ENCODE measurements at regions of chr1 and their contacts with region 1.

Region 1: DNA sequence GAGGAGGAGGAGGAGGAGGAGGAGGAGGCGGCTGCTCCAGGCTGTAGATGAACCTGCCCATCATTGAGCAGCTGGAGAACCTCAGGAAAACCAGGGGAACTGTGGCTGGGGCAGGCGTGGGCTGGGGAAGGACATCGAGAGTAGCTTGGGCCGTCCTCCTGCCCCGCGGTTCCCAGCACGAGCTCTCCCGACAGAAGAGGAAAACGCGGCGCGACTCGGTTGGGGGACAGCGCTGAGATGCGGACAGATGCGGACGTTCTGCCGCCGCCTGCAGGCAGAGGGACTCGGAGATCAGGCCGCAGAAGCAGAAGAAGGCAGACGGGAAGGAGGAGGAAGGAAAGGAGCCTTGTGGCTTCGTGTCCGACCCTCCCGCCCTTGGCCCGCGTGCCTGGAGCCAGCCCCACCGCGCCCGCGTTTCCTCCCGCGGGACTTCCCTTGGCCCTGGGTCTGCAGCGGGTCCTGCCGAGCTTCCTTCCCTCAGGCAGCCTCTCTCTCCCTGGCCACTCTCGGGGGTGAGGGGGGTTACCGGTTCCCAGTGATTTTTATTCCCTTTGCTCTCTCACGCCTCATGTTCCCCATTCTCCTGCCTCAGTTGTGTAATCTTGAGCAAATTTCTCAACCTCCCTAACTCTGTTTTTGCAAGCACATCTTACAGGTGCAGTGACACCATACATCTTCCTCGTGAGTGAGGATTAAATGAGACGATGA is 1.7 kb upstream of the TNFRSF9 start:
- DNase-seq: peak; percentile 49
- ATAC-seq: peak; percentile 64
- H3K4me3 Mint-ChIP-seq: peak overlapping the region; percentile 23
- H3K27ac Mint-ChIP-seq: no peak overlapping the region
- H3K4me1 Mint-ChIP-seq: peaks cover 46% of the 10 kb centered on the region
- H3K27me3 Mint-ChIP-seq: peaks cover 8% of the 10 kb centered on the region

Region 2: GRCh38 chr1:7827126-7827955 is 115.0 kb before region 1 on chr1:
- CTCF ChIA-PET with region 1: no interaction called
- POLR2A ChIA-PET with region 1: no interaction called
- DNase-seq: peak; percentile 22
- ATAC-seq: peak; percentile 67
- H3K4me3 Mint-ChIP-seq: peak overlapping the region; percentile 73
- H3K27ac Mint-ChIP-seq: peak overlapping the region; percentile 84
- H3K4me1 Mint-ChIP-seq: peaks cover 7% of the 10 kb centered on the region
- H3K27me3 Mint-ChIP-seq: no peaks in the 10 kb centered on the region

Region 3: GRCh38 chr1:7930645-7931445 is 11.5 kb before region 1 on chr1:
- CTCF ChIA-PET with region 1: interaction called, 16 read pairs
- POLR2A ChIA-PET with region 1: interaction called, 9 read pairs
- DNase-seq: no peak
- ATAC-seq: peak; percentile 61
- H3K4me3 Mint-ChIP-seq: peak overlapping the region; percentile 63
- H3K27ac Mint-ChIP-seq: peak overlapping the region; percentile 91
- H3K4me1 Mint-ChIP-seq: peaks cover 33% of the 10 kb centered on the region
- H3K27me3 Mint-ChIP-seq: no peaks in the 10 kb centered on the region

Region 4: DNA sequence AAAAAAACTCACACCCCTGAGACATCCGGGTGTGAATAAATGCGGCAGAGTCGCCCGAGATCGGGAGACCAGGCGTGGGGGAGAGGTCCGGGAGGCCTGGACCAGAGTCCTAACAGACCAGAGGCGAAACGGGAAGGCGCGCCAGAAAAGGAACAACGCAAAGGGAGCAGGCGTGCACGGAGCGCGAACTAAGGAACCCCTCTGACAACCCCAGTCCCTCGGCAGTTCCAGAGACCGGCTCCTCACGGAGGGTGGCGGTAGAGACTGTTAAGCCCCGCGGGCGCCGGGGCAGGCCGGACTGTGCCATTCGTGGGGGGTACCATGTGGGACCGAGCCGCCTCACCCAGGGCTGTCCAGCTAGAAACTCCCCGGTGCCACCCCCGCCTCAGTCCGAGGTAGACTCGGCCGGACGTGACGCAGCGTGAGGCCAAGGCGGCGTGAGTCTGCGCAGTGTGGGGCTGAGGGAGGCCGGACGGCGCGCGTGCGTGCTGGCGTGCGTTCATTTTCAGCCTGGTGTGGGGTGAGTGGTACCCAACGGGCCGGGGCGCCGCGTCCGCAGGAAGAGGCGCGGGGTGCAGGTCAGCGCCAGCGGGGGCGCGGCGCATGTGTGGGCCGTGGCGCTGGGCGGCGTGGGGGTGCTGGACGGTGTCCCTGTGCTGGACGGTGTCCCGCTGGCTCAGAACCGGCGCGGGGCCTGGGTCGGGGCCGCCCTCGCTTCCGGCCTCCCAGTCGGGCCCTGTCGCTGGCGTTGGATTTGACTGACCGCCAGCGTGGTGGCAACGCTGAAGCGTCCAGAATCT is 19.0 kb after region 1 on chr1 and contains the start of gene PARK7:
- CTCF ChIA-PET with region 1: interaction called, 4 read pairs
- POLR2A ChIA-PET with region 1: interaction called, 13 read pairs
- DNase-seq: peak; percentile 100
- ATAC-seq: peak; percentile 98
- H3K4me3 Mint-ChIP-seq: peak within 1 kb of the TSS; percentile 97
- H3K27ac Mint-ChIP-seq: peak within 1 kb of the TSS; percentile 99
- H3K4me1 Mint-ChIP-seq: peaks cover 60% of the 10 kb centered on the region
- H3K27me3 Mint-ChIP-seq: no peaks in the 10 kb centered on the region
- total RNA-seq, gene PARK7: 296 to 302 TPM

Measured in activated CD8-positive, alpha-beta T cell treated with anti-CD3 and anti-CD28 coated beads, Interleukin-2, amount 10 ng/mL, durations not matched to agents 7 days and 5 days (primary cell).